AG04449 (cell line): ENCODE measurements at regions of chr15 and their contacts with region 1.

Region 1: DNA sequence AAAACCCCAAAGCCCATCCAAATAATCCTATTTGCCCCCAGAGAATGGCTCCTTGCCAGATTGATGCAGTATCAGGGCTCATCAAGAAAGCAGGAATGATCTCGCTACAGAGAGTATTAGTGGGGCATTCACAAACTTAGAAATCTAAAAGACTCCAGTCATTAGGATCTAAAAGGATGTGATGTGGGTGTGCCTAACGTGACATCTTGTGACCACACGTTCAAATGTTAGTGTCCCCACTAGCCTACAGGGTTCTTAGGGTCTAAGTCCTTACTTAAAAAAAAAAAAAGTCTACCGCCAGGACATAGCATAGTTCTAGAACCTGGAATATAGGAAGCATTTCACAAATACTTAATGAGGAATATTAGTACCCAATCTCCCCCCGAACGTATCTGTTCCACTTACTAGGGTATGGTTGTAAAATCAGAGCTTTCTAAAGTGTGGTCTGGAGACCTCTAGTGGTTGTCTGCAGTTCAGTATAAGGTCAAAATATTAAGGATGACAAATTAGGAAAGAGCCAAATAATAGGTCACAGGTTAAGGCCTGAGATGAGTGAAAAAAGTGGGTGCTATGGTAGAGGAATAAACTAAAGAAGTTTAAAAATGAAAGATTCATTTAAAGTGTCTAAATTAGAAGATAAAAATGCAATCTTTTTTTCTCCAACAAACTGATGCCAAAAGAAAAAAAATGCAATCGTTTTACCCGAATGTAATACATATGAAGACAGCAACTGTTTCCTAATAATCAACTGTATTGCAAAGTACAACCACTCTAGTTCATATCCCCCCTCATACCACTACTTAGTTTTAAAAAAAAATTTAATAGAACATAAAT is 4.2 kb upstream of the CHRM5 start:
- DNase-seq: no peak
- H3K4me3 ChIP-seq: no peak overlapping the region
- CTCF ChIP-seq: peak; percentile 46

Region 2: GRCh38 chr15:33506781-33507296 is 457.2 kb before region 1 on chr15:
- CTCF ChIA-PET with region 1: no interaction called
- POLR2A ChIA-PET with region 1: no interaction called
- DNase-seq: peak; percentile 7
- H3K4me3 ChIP-seq: no peak overlapping the region
- CTCF ChIP-seq: no peak

Region 3: DNA sequence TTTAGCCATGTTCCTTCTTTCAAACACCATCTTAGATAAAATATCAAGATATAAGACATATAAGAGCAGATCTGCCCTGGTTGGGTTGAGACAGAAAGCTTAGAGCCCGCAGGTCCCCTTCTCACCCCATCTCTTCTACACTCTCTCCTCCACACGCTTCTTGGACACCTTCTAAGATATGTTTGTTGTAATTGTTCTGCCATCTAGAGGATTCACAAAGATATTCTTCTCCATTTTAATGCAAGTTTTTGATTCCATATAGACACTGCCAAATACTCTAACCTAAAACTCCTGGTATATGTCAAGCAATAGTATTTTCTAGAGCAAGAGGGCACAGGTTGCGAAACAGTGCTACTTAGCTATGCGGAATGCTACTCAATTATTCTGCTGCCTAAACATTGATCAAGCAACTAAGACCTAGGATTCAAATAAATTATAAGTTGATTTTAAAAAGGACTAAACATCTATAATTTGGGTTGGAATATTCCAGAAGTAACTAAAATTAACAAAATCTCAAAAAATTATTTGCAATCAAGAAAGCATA is 11.0 kb after region 1 on chr15:
- CTCF ChIA-PET with region 1: interaction called, 17 read pairs
- POLR2A ChIA-PET with region 1: no interaction called
- DNase-seq: no peak
- H3K4me3 ChIP-seq: no peak overlapping the region
- CTCF ChIP-seq: no peak